Pancreas (tissue), 10 donors: ENCODE measurements at regions of chr20 and their contacts with region 1.

Region 1: DNA sequence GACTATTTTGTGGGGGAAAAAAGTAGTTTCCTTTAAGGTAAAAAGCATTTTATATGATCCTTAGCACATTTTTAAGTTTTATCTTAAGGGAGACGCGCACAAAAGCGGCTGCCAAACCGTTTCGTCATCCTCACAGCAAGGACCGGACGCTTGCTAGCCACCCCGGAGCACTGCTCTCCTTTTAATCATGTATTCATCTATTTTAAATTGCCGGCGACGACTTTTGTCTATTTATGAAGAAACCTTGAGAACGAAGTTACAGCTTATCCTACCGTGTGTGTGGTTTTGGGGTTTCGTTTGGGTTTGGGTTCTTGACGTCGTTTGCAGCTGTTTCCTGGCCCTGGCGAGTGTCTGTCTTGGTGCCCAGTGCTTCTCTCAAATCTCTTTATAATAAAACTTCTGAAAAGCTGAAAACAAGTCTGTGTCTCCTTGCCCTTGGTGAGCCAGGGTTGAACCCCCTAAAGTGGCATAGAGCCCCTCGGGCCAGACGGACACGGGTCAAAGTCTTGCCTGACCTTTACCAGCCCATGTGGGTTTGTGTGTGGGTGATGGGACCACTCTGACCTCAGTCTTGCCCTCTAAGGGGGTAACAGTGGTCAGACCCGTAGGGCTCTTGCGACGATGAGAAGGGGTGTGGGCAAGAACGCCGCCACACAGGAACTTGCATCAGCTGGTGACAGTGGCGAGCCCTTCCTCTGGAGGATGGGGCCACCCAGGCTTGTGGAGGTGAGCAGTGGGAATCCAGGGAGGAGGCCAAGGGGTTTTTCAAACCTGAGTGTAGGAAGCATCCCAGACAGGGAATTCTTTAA is 117.6 kb downstream of the JPH2 start:
- DNase-seq: no peak
- ATAC-seq: peak in 1 of 4 donors; percentile 16
- H3K4me3 ChIP-seq: no peak overlapping the region
- H3K27ac ChIP-seq: no peak overlapping the region
- H3K4me1 ChIP-seq: no peaks in the 10 kb centered on the region
- H3K27me3 ChIP-seq: no peaks in the 10 kb centered on the region
- CTCF ChIP-seq: no peak

Region 2: DNA sequence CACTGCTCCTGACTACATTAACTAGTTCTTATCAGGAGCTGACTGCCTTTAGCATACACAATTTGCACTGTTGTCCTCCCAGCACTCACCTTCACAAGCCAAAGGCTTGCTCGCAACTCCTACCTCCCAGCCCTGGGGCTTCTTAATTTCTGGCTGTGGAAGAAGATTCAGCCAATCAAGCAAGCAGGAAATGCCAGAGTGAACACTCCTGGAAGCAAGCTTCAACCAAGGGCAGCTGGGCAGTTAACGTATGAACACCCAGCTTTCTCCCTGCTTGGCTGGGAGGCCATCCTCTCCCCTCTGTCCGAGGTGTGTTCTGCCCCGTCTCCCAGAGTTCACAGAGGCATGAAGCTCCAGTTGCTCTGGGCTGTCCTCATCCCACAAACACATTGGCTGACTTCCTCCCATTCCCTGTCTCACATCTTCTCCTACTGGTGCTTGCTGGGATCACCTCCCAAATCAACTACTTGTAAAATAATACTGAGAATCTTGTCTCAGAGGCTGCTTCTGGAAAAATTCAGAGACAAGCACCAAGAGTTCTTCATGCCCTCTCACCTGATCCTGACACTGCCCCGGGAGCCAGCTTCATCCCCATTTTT is 627.0 kb before region 1 on chr20:
- intact Hi-C with region 1: no loop called
- DNase-seq: no peak
- ATAC-seq: no peak
- H3K4me3 ChIP-seq: no peak overlapping the region
- H3K27ac ChIP-seq: no peak overlapping the region
- H3K4me1 ChIP-seq: no peaks in the 10 kb centered on the region
- H3K27me3 ChIP-seq: no peaks in the 10 kb centered on the region
- CTCF ChIP-seq: no peak

Region 3: DNA sequence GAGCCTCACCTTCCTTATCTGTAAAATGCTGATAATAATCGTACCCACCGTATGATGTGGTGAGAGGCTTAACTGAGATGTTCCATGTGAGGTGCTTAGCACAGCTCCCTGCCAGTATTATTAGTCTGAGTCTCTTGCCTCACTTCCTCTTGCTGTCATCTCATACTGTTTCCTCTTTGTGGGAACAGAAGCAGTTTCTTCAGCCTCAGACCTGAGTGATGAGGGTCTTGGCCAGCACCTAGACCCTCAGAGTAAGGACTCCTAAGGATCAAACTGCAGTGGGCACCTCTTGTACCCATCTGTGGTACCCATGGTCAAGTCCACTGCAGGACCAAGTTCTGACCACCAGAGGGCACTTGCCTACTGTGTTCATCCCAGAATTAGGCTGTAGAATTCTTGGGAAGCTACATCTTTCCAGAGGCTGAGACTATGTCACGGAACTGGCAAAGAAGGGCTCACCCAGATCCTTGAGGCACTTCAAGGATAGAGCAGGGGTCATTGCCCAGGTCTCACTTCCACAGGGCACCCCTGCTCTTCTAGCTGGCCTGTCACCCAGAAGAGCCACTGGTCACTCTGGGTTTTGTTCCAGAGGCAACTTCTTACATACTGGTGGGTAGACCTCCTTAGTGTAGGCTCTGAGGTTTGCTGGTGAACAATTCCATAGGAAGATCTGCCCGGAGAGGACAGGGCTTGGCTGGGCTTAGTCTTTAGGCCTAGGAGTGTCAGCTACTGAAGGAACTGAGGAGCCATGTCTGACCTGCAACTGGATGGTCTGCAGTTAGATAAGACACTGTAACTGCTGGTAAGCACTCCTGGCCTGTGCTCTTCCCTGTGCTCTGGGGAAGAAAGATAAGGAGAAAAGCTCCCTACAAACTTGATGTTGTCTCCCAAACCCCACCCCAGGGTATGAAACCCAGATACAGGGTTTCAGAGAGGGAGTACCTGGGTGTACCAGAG is 531.2 kb before region 1 on chr20:
- intact Hi-C with region 1: loop called in 1 of 3 experiments (anchors 10 kb)
- DNase-seq: peak; percentile 47 to 87 (median 74)
- ATAC-seq: peak; percentile 81 to 89 (median 84)
- H3K4me3 ChIP-seq: no peak overlapping the region
- H3K27ac ChIP-seq: no peak overlapping the region
- H3K4me1 ChIP-seq: peaks cover 0 to 16% (median 6%) of the 10 kb centered on the region in 3 donors
- H3K27me3 ChIP-seq: no peaks in the 10 kb centered on the region
- CTCF ChIP-seq: peak; percentile 80 to 94 (median 91)

Region 4: DNA sequence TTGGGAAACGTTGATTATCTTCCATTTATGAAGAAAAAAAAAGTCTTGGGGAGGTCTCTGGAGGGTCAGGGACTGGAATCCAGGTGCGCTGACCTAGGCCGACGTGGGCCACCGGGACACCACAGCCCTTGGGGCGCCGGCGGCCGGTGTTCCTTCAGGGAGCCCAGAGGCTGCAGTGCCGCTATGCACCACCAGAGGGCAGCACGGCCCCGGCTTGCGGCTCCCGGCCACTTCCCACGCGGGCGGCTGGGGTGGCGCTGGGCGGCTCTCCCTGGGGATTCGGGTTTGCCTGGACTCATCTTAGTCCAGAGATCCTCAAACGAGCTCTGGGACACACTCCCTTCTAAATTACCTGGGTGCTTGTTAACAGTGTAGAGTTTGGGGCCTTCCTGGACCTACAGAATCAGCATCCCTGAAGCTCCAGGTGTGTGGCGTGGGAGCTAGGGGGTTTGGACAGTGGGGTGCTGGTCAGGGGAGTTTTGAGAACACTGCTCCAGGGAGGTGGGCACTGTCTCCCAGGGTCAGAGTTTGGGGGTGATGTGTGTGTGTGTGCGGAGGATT is 319.6 kb before region 1 on chr20:
- intact Hi-C with region 1: loop called in 1 of 3 experiments (anchors 10 kb)
- DNase-seq: peak; percentile 41 to 99 (median 79)
- ATAC-seq: peak; percentile 79 to 93 (median 92)
- H3K4me3 ChIP-seq: no peak overlapping the region
- H3K27ac ChIP-seq: no peak overlapping the region
- H3K4me1 ChIP-seq: no peaks in the 10 kb centered on the region
- H3K27me3 ChIP-seq: peaks cover 0 to 19% (median 1%) of the 10 kb centered on the region in 4 donors
- CTCF ChIP-seq: peak; percentile 99

Region 5: DNA sequence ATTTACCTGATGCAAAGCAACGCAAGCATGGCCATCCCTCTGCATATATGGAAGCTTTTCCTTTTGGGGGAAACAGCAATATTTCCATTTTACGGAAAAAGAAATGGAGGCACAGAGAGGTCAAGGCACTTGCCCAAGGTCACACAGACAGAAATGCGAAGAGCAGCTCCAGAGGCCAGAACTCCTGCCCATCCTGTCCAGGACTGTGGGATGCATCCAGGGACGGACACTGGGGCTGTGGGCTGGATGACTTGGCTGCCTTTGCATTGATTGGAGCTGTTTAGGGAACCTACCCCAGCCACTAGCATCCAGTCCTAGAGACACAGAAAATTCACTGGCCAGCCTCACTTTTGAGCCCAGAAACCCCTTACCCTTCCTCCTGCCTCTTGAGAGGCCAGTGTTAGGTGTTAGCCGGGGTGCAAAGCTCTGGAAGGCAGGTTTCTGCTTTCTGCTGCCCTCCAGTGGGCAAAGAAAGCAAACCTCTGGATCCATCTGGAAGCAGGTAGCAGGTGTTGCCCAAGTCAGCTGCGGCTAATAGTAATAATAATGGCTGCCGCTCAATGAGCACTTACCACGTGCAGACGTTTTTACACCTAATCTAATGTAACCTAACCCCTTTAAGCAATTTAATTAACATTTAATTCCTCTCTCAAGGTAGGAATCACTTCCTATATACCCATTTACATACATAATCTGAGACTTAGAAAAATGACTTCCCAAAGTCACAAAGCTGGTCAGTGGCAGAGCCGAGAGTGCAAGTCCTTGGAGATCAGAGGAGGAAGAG is 614.0 kb after region 1 on chr20:
- intact Hi-C with region 1: no loop called
- DNase-seq: peak in 4 of 6 donors; percentile 47 to 73 (median 69)
- ATAC-seq: peak; percentile 83 to 92 (median 88)
- H3K4me3 ChIP-seq: no peak overlapping the region
- H3K27ac ChIP-seq: no peak overlapping the region
- H3K4me1 ChIP-seq: no peaks in the 10 kb centered on the region
- H3K27me3 ChIP-seq: no peaks in the 10 kb centered on the region
- CTCF ChIP-seq: peak in 3 of 4 donors; percentile 25 to 54 (median 40)

Region 6: GRCh38 chr20:44856856-44857448 is 787.5 kb after region 1 on chr20:
- intact Hi-C with region 1: no loop called
- DNase-seq: no peak
- ATAC-seq: peak in 2 of 4 donors; percentile 23 to 43
- H3K4me3 ChIP-seq: no peak overlapping the region
- H3K27ac ChIP-seq: no peak overlapping the region
- H3K4me1 ChIP-seq: peaks cover under 1 to 9% (median 2%) of the 10 kb centered on the region in 3 donors
- H3K27me3 ChIP-seq: no peaks in the 10 kb centered on the region
- CTCF ChIP-seq: no peak